ENCODE measurements at regions of chr11 and their contacts with region 1.

Region 1: GRCh38 chr11:65418711-65419459 is 3.7 kb upstream of the NEAT1 start:
- DNase-seq: peak; percentile 98 to 99 (median 98)
- ATAC-seq: peak; percentile 19 to 48 (median 32)
- H3K4me3 ChIP-seq: peak overlapping the region; percentile 22 to 87 (median 40)
- H3K27ac ChIP-seq: peak overlapping the region; percentile 97 to 100 (median 100)
- H3K4me1 ChIP-seq: peaks cover 0 to 44% (median 16%) of the 10 kb centered on the region in 4 donors
- H3K27me3 ChIP-seq: no peaks in the 10 kb centered on the region
- CTCF ChIP-seq: no peak
- POLR2A ChIP-seq: peak; percentile 77

Region 2: DNA sequence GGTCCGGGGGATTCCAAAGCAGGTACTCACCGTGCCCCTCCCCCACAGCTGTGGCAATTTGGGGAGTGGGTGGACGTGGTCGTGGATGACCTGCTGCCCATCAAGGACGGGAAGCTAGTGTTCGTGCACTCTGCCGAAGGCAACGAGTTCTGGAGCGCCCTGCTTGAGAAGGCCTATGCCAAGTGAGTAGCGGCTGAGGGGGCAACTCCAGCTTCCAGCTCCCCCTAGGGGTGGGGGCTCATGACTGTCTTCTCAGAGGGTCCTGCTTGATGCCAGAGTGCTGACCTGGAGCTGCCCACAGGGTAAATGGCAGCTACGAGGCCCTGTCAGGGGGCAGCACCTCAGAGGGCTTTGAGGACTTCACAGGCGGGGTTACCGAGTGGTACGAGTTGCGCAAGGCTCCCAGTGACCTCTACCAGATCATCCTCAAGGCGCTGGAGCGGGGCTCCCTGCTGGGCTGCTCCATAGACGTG is 233.0 kb before region 1 on chr11:
- intact Hi-C with region 1: no loop called
- DNase-seq: peak in 2 of 3 donors; percentile 35 to 46
- ATAC-seq: no peak
- H3K4me3 ChIP-seq: no peak overlapping the region
- H3K27ac ChIP-seq: no peak overlapping the region
- H3K4me1 ChIP-seq: no peaks in the 10 kb centered on the region
- H3K27me3 ChIP-seq: no peaks in the 10 kb centered on the region
- CTCF ChIP-seq: no peak
- POLR2A ChIP-seq: no peak

Region 3: DNA sequence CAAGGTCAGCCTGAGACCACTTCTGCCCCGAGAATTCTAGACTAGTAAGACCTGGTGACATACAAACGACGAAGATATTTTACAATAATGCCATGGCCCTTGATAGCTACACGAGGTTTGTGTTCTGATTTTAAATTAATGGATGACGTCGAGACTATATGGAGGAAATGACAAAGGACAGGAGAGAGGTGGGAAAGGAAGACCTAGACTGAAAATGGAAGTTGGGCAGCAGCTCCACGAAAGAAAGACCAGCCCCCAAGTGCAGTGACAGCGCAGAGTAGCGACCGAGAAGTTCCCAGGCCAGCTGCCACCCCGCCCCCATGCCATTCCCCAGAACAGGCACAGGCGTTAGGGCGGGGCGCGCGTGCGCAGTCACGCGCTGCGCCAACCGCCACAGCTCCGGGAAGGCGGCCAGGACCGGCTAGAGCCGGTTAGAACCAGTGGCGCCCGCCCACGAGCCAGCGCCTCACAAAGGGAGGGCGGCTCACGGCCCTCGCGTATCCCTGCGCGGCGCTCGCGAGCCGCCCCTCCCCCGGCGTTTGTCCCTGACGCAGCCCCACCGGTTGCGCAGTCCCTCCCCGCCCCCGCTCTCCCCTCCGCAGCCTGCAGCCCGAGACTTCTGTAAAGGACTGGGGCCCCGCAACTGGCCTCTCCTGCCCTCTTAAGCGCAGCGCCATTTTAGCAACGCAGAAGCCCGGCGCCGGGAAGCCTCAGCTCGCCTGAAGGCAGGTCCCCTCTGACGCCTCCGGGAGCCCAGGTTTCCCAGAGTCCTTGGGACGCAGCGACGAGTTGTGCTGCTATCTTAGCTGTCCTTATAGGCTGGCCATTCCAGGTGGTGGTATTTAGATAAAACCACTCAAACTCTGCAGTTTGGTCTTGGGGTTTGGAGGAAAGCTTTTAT is 78.5 kb after region 1 on chr11:
- intact Hi-C with region 1: loop called in 1 of 2 experiments (anchors 5 kb)
- DNase-seq: peak; percentile 99
- ATAC-seq: peak; percentile 65 to 90 (median 82)
- H3K4me3 ChIP-seq: peak overlapping the region; percentile 61 to 75 (median 67)
- H3K27ac ChIP-seq: peak overlapping the region; percentile 99 to 100 (median 100)
- H3K4me1 ChIP-seq: peaks cover 0 to 45% (median 21%) of the 10 kb centered on the region in 4 donors
- H3K27me3 ChIP-seq: no peaks in the 10 kb centered on the region
- CTCF ChIP-seq: peak in 1 of 4 donors; percentile 10
- POLR2A ChIP-seq: peak; percentile 85

Measured in right lobe of liver (tissue), 6 donors.